ENCODE measurements at regions of chr16 and their contacts with region 1.

Region 1: GRCh38 chr16:30472328-30472942 is at the start of gene ITGAL:
- DNase-seq: peak; percentile 93
- H3K4me3 Mint-ChIP-seq: peak within 1 kb of the TSS; percentile 98
- H3K27ac Mint-ChIP-seq: peak within 1 kb of the TSS; percentile 97
- H3K4me1 Mint-ChIP-seq: peaks cover 53% of the 10 kb centered on the region
- H3K27me3 Mint-ChIP-seq: no peaks in the 10 kb centered on the region
- total RNA-seq, gene ITGAL: 218 to 226 TPM

Region 2: DNA sequence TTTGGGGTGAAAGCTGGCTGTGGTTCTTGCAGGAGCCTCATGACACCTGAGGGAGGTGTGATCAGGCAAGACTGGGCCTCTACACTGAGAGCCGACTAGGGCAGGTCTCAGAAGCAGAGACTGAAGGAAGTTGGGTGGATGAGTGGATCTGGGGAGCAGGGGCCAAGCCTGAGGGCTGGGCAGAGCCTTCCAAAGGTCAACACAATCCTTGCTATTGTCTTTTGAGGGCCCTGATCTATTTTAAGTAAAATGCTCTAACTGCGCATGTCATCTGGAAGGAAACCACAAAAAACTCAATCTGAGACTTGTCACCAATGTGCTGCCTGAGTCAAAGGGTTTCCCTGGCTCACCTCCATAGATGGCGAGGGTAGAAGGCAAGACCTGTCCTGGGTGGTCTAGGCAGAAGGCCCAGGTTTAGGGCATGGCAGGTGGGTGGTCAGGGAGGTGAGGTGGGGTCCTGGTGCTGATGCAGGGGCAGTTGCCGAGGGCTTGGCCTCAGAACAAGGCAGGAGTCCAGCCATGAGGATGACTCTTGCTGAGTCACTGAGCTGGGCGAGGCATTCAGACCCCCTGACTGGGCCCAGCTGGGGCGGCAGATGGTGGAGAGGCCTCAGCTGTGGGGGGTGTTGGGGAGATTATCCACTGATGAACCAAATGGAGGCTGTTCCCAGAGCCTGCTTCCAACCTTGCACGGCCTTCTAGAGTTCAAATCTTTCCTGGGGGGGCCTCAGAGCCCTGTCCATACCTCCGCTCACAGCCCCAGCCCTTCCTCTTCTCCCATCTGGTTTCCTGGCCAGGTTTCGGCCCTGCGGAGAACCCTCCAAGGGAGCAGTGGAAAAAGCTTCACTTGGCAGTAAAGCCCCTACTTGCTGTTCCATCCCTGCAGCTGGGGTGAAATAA is 647.0 kb before region 1 on chr16:
- CTCF ChIA-PET with region 1: no interaction called
- POLR2A ChIA-PET with region 1: no interaction called
- intact Hi-C with region 1: loop called (anchors 5 kb)
- DNase-seq: peak; percentile 72
- H3K4me3 Mint-ChIP-seq: peak overlapping the region; percentile 59
- H3K27ac Mint-ChIP-seq: peak overlapping the region; percentile 95
- H3K4me1 Mint-ChIP-seq: peaks cover 64% of the 10 kb centered on the region
- H3K27me3 Mint-ChIP-seq: no peaks in the 10 kb centered on the region

Region 3: GRCh38 chr16:30370444-30371247 is 101.8 kb before region 1 on chr16 and contains the start of gene TBC1D10B:
- CTCF ChIA-PET with region 1: no interaction called
- POLR2A ChIA-PET with region 1: no interaction called
- intact Hi-C with region 1: loop called (anchors 2 kb)
- DNase-seq: peak; percentile 100
- H3K4me3 Mint-ChIP-seq: peak within 1 kb of the TSS; percentile 91
- H3K27ac Mint-ChIP-seq: peak within 1 kb of the TSS; percentile 95
- H3K4me1 Mint-ChIP-seq: peaks cover 34% of the 10 kb centered on the region
- H3K27me3 Mint-ChIP-seq: peaks cover 3% of the 10 kb centered on the region
- total RNA-seq, gene TBC1D10B: 54.7 to 54.8 TPM

Region 4: DNA sequence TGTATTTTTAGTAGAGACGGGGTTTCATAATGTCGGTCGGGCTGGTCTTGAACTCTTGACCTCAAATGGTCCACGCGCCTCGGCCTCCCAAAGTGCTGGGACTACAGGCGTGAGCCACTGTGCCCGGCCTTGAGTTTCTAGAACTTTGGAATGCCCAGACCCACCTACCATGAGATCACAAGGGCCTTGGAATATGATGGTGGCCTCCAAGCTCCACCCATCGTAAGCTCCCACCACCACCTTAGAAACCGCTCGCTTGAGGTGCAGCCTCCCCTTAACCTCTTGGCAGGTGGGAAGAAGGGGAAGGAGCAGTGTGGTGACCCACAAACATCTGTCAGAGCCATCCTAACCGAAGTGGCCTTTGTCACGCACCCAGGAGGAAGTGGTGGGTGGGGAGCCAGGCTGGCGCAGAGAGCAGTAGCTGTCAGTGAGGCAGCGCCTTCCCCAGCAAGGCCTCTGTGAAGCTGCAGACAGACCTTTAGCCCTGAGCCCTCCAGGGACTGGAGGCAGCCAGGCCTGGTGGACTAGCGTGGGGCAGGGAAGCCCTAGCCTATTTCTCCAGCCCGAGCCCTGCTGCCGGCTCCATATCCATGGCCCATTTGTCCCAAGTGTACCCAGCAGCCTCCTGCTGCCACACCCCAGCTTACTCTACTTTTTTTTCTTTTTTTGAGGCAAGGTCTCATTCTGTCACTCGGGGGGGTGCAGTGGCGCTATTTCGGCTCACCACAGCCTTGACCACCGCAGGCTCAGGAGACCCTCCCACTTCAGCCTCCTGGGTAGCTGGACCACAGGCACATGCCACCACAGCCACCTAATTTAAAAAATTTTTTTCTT is 13.7 kb before region 1 on chr16:
- CTCF ChIA-PET with region 1: interaction called, 30 read pairs
- POLR2A ChIA-PET with region 1: interaction called, 132 read pairs
- intact Hi-C with region 1: loop called (anchors 1 kb)
- DNase-seq: peak; percentile 97
- H3K4me3 Mint-ChIP-seq: peak overlapping the region; percentile 63
- H3K27ac Mint-ChIP-seq: peak overlapping the region; percentile 96
- H3K4me1 Mint-ChIP-seq: peaks cover 43% of the 10 kb centered on the region
- H3K27me3 Mint-ChIP-seq: no peaks in the 10 kb centered on the region

Region 5: GRCh38 chr16:30526823-30527635 is 54.6 kb after region 1 on chr16:
- CTCF ChIA-PET with region 1: no interaction called
- POLR2A ChIA-PET with region 1: interaction called, 7 read pairs
- intact Hi-C with region 1: loop called (anchors 2 kb)
- DNase-seq: peak; percentile 98
- H3K4me3 Mint-ChIP-seq: peak overlapping the region; percentile 73
- H3K27ac Mint-ChIP-seq: peak overlapping the region; percentile 86
- H3K4me1 Mint-ChIP-seq: peaks cover 38% of the 10 kb centered on the region
- H3K27me3 Mint-ChIP-seq: no peaks in the 10 kb centered on the region

Region 6: DNA sequence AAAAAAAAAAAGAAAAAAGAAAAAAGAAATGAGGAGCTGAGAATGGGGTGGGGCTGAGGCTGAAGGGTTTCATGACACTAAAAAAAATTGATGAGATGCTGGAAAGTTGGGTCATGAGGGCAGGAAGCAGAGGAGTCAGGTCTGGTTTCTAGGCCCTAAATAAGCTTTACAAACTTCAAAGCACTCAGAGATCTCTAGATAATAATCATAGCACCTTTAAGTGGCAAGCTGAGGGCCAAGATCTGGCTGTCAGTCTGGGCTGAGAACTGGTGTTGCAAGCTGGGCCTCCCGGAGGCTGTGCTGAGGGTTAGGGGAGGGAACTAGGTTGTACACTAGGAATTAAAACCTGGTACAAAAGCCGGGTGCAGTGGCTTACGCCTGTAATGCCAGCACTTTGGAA is 79.3 kb after region 1 on chr16:
- CTCF ChIA-PET with region 1: interaction called, 3 read pairs
- POLR2A ChIA-PET with region 1: interaction called, 3 read pairs
- intact Hi-C with region 1: loop called (anchors 5 kb)
- DNase-seq: peak; percentile 79
- H3K4me3 Mint-ChIP-seq: peak overlapping the region; percentile 58
- H3K27ac Mint-ChIP-seq: peak overlapping the region; percentile 96
- H3K4me1 Mint-ChIP-seq: peaks cover 57% of the 10 kb centered on the region
- H3K27me3 Mint-ChIP-seq: no peaks in the 10 kb centered on the region

Region 7: DNA sequence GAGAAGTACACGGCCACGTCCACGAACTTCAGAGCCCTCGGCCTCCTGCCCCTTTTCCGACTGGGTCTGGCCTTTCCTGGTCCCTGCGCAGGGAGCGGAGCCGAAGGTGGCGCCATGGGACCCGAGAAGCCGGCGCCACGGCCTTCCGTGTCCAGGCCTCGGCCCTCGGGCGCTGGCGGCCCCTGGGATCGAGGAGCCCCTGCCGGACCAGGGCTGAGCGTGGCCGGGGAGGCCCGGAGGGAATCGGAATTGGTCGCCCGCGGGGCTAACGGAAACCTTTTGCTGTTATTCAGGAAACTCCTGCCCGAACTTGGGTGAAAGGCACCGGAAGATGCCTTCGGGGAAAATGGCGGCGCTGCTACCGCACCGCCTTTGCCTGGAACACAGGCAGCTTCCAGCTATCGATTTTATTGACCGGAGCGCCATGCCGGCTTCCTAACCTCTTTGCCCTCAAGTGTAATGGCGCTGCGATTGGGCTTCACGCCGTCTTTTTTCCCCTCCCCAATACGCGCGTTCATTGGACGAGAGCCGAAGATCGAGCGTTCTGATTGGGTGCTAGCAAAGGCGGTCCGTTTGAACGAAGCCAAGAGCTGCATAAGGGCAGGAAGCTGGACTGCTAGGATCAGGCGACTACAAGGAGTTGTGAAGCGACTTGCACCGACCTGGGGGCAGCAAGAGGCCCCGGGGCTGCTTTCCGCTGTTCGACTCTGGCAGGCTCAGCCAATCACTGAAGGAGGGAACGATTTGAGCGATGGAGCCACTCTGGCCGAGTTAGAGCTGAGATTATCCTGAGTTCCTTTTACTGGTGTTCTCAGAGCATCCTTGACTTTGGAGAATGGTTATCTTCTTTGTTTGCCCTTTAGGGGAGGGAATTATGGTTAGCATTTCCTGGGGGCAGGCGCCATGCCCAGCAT is 137.7 kb after region 1 on chr16 and contains the start of gene ZNF689:
- CTCF ChIA-PET with region 1: interaction called, 3 read pairs
- POLR2A ChIA-PET with region 1: no interaction called
- intact Hi-C with region 1: loop called (anchors 1 kb)
- DNase-seq: peak; percentile 98
- H3K4me3 Mint-ChIP-seq: peak within 1 kb of the TSS; percentile 89
- H3K27ac Mint-ChIP-seq: peak within 1 kb of the TSS; percentile 94
- H3K4me1 Mint-ChIP-seq: peaks cover 15% of the 10 kb centered on the region
- H3K27me3 Mint-ChIP-seq: no peaks in the 10 kb centered on the region
- total RNA-seq, gene ZNF689: 8.7 to 9.9 TPM